Esophagus squamous epithelium (tissue), 5 donors: ENCODE measurements at regions of chr20 and their contacts with region 1.

Region 1: GRCh38 chr20:17898548-17898994 is 70.0 kb downstream of the SNX5 start:
- DNase-seq: no peak
- H3K4me3 ChIP-seq: no peak overlapping the region
- H3K27ac ChIP-seq: no peak overlapping the region
- H3K4me1 ChIP-seq: peaks cover 0 to 26% (median 16%) of the 10 kb centered on the region in 3 donors
- H3K27me3 ChIP-seq: peaks cover 0 to 7% (median 0%) of the 10 kb centered on the region in 4 donors
- CTCF ChIP-seq: peak; percentile 83 to 97 (median 94)
- POLR2A ChIP-seq: no peak

Region 2: DNA sequence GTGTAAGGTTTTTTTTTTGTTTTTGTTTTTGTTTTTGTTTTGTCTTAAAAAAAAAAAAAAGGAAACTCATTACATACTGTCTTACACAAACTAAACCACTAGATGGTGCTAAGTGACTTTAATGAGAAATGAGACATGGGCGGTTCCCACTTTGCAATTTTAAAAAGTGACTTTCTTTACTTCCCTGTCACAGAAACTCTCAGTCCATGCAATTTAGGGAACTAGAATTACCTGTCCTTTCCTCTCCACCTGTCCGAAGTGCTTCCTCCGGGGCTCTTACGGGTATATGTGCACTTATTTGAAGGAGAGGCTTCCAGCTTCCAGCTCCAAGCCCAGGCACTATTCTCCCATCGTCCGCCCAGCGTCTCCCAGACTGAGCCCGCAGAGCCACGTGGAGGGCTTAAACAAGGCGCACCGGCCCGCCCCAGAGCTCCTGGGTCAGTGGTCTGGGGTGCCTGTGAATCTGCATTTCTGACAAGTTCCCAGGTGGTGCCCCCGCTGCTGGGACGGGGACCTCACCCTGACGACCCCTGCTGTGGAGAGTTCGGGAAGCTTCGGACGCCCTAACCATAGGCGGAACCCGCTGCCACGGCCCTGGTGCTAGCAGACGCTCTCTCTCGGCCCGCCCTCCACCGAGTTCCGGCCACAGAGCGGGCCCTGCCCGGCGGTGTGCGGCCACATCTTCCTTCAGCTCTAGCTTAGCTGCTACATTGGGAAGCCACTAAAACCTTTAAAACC is 393.5 kb before region 1 on chr20:
- intact Hi-C with region 1: loop called (anchors 10 kb)
- DNase-seq: no peak
- H3K4me3 ChIP-seq: peak overlapping the region; percentile 17 to 67 (median 52)
- H3K27ac ChIP-seq: peak overlapping the region; percentile 18 to 82 (median 52)
- H3K4me1 ChIP-seq: peaks cover 11 to 27% (median 14%) of the 10 kb centered on the region in 3 donors
- H3K27me3 ChIP-seq: no peaks in the 10 kb centered on the region
- CTCF ChIP-seq: peak; percentile 33 to 76 (median 60)
- POLR2A ChIP-seq: no peak

Region 3: DNA sequence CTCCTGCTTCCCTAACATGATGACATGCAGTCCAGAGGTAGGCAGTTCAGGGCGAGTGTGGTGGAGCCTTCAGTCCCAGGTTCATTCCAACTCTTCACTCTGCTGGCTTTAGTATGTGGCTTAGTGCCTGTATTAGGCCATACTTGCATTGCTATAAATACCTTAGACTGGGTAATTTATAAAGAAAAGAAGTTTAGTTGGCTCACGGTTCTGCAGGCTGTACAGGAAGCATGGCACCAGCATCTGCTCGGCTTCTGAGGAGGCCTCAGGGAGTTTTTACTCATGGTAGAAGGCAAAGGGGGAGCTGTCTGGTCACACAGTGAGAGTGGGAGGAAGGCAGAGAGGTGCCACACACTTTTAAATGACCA is 347.6 kb before region 1 on chr20:
- intact Hi-C with region 1: no loop called
- DNase-seq: no peak
- H3K4me3 ChIP-seq: no peak overlapping the region
- H3K27ac ChIP-seq: peak overlapping the region in 2 of 4 donors; percentile 17 to 46
- H3K4me1 ChIP-seq: peaks cover 0 to 19% (median under 1%) of the 10 kb centered on the region in 3 donors
- H3K27me3 ChIP-seq: no peaks in the 10 kb centered on the region
- CTCF ChIP-seq: no peak
- POLR2A ChIP-seq: no peak

Region 4: GRCh38 chr20:17682103-17682888 is 216.3 kb before region 1 on chr20 and contains the start of gene RRBP1:
- intact Hi-C with region 1: loop called (anchors 5 kb)
- DNase-seq: peak; percentile 96
- H3K4me3 ChIP-seq: peak within 1 kb of the TSS; percentile 75 to 96 (median 85)
- H3K27ac ChIP-seq: peak within 1 kb of the TSS; percentile 92 to 99 (median 98)
- H3K4me1 ChIP-seq: peaks cover 11 to 37% (median 15%) of the 10 kb centered on the region in 3 donors
- H3K27me3 ChIP-seq: peaks cover 0 to 14% (median 0%) of the 10 kb centered on the region in 4 donors
- CTCF ChIP-seq: peak; percentile 49 to 76 (median 61)
- POLR2A ChIP-seq: peak in 3 of 4 donors; percentile 85 to 95 (median 92)
- total RNA-seq, gene RRBP1: 61.4 to 128 (median 72.7) TPM